Caco-2 (cell line): ENCODE measurements at regions of chr6 and their contacts with region 1.

Region 1: GRCh38 chr6:106677282-106677681 is 47.9 kb downstream of the QRSL1 start:
- DNase-seq: no peak
- H3K4me3 ChIP-seq: no peak overlapping the region
- H3K4me3 Mint-ChIP-seq: no peak overlapping the region
- H3K27ac Mint-ChIP-seq: no peak overlapping the region
- H3K4me1 ChIP-seq: no peaks in the 10 kb centered on the region
- H3K4me1 Mint-ChIP-seq: no peaks in the 10 kb centered on the region
- H3K27me3 ChIP-seq: no peaks in the 10 kb centered on the region
- H3K27me3 Mint-ChIP-seq: no peaks in the 10 kb centered on the region
- CTCF ChIP-seq: no peak

Region 2: DNA sequence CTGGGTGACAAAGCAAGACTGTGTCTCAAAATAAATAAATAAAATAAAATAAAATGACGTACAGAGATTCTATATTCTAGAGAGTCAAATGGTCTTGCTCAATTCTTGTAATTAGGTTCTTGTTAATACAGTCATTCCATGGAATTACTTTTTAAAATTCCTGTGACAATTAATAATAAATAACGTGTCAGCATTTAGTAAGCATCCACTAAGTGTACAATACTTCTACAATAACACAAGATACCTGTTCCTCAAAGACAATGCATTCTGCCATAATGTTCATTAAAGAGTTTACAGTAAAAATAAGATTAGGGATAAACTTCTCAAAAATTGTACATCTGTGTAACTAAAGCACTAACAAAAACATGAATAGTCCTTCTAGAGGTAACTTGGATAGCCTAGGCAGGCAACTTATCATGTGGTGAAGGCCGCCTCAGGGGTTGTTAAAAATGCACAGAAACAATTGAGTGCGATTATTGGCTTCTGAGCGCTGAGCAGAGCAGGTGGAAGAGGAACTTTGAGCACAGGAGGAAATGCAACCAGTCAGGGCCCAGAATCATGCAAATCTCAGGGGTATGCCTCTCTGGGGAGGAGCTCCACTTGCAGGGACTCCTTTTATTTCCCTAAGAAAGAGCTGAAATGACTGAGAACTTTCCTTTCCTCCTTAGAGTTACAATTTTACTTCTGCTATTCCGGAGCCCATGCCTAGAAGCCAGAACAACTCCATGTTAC is 10.8 kb before region 1 on chr6:
- CTCF ChIA-PET with region 1: no interaction called
- POLR2A ChIA-PET with region 1: interaction called, 19 read pairs
- intact Hi-C with region 1: no loop called
- DNase-seq: no peak
- H3K4me3 ChIP-seq: no peak overlapping the region
- H3K4me3 Mint-ChIP-seq: no peak overlapping the region
- H3K27ac Mint-ChIP-seq: no peak overlapping the region
- H3K4me1 ChIP-seq: no peaks in the 10 kb centered on the region
- H3K4me1 Mint-ChIP-seq: no peaks in the 10 kb centered on the region
- H3K27me3 ChIP-seq: no peaks in the 10 kb centered on the region
- H3K27me3 Mint-ChIP-seq: no peaks in the 10 kb centered on the region
- CTCF ChIP-seq: no peak

Region 3: DNA sequence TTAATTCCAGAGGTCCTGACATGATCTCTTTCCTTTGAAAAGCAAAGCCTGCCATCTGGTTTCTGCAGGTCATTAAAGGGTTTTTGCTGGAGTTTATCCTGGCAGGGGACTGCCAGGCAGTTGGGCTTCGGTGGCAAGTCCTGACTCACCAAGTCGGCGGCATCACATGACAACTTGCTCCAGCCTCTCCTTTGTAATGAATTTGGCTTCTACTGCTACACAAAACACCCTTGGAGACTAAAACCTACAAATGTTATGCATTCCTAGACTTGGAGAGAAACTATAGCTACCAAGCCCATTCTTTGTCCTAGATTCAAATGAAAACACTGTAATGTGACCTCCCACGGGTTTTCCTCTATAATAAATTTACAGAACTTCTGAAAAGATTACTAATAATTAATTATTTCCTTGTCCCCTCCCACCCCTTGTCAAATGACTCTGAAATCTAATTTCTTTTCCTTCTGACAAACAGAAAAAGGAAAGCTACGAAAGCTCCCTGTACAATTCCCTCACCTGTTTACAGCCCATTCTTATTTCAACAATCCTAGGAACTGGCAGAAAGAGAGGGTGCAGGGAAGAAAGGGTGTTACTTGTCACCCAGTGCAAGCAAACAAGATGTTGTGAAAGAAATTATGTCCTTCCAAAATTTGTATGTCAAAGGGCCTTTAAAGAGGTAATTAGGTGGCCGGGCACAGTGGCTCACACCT is 15.0 kb after region 1 on chr6:
- CTCF ChIA-PET with region 1: no interaction called
- POLR2A ChIA-PET with region 1: no interaction called
- intact Hi-C with region 1: no loop called
- DNase-seq: no peak
- H3K4me3 ChIP-seq: no peak overlapping the region
- H3K4me3 Mint-ChIP-seq: no peak overlapping the region
- H3K27ac Mint-ChIP-seq: no peak overlapping the region
- H3K4me1 ChIP-seq: no peaks in the 10 kb centered on the region
- H3K4me1 Mint-ChIP-seq: no peaks in the 10 kb centered on the region
- H3K27me3 ChIP-seq: no peaks in the 10 kb centered on the region
- H3K27me3 Mint-ChIP-seq: peaks cover 3% of the 10 kb centered on the region
- CTCF ChIP-seq: no peak

Region 4: DNA sequence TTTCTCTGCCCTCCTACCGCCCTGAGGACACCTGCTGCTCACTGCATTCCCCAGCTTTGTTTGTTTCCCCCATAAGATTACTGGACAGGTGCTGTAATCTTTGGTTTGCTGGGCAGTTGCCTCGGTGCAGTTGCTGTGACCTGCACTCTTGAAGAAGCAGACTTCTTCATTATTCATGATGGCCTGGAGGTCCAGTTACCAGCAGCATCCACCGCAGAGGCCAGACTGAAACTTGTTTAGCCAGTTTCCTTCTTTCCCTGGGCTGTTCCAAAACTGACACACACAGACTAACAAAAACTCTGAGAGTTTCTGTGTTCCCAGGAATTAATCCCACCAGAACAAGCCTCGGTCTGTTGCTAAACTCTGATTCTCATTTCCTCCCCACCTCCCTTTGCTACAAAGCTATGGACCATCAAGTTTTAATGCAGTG is 96.2 kb after region 1 on chr6:
- CTCF ChIA-PET with region 1: no interaction called
- POLR2A ChIA-PET with region 1: no interaction called
- intact Hi-C with region 1: no loop called
- DNase-seq: peak; percentile 36 to 45
- H3K4me3 ChIP-seq: no peak overlapping the region
- H3K4me3 Mint-ChIP-seq: no peak overlapping the region
- H3K27ac Mint-ChIP-seq: peak overlapping the region; percentile 8
- H3K4me1 ChIP-seq: no peaks in the 10 kb centered on the region
- H3K4me1 Mint-ChIP-seq: peaks cover 10% of the 10 kb centered on the region
- H3K27me3 ChIP-seq: no peaks in the 10 kb centered on the region
- H3K27me3 Mint-ChIP-seq: no peaks in the 10 kb centered on the region
- CTCF ChIP-seq: no peak

Region 5: GRCh38 chr6:106820412-106820852 is 143.2 kb after region 1 on chr6:
- CTCF ChIA-PET with region 1: no interaction called
- POLR2A ChIA-PET with region 1: no interaction called
- intact Hi-C with region 1: no loop called
- DNase-seq: peak in 1 of 2 experiments; percentile 42
- H3K4me3 ChIP-seq: no peak overlapping the region
- H3K4me3 Mint-ChIP-seq: no peak overlapping the region
- H3K27ac Mint-ChIP-seq: no peak overlapping the region
- H3K4me1 ChIP-seq: peaks cover 8% of the 10 kb centered on the region
- H3K4me1 Mint-ChIP-seq: peaks cover 7% of the 10 kb centered on the region
- H3K27me3 ChIP-seq: no peaks in the 10 kb centered on the region
- H3K27me3 Mint-ChIP-seq: no peaks in the 10 kb centered on the region
- CTCF ChIP-seq: no peak